ENCODE measurements at regions of chr12 and their contacts with region 1.

Region 1: GRCh38 chr12:442235-442884 is 17.4 kb upstream of the B4GALNT3 start:
- DNase-seq: peak; percentile 73
- H3K4me3 ChIP-seq: no peak overlapping the region
- H3K27ac ChIP-seq: no peak overlapping the region
- H3K4me1 ChIP-seq: no peaks in the 10 kb centered on the region
- H3K27me3 ChIP-seq: no peaks in the 10 kb centered on the region
- CTCF ChIP-seq: peak; percentile 78

Region 2: DNA sequence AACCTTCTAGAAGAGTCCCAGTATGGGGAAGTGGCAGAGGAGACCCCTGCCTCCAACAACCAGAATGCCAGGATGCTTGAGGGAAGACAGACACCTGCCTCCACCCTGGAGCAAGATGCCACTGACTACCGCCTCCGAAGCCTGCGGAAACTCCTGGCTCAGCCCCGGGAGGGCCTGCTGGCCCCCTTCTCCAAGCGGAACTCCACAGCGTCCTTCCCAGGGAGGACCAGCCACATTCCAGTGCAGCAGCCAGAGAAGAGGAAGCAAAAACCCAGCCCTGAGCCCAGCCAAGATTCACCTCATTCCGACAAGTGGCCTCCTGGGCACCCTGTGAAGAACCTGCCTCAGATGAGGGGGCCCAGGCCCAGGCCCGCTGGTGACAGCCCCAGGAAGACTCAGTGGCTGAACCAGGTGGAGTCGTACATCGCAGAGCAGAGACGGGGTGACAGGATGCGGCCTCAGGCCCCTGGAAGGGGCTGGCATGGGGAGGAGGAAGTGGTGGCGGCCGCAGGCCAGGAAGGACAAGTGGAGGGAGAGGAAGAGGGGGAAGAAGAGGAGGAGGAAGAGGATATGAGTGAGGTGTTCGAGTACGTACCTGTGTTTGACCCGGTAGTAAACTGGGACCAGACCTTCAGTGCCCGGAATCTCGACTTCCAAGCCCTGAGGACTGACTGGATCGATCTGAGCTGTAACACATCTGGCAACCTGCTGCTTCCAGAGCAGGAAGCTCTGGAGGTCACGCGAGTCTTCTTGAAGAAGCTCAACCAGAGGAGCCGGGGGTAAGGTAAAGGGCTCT is 111.0 kb after region 1 on chr12:
- intact Hi-C with region 1: loop called (anchors 5 kb)
- DNase-seq: no peak
- H3K4me3 ChIP-seq: no peak overlapping the region
- H3K27ac ChIP-seq: no peak overlapping the region
- H3K4me1 ChIP-seq: no peaks in the 10 kb centered on the region
- H3K27me3 ChIP-seq: no peaks in the 10 kb centered on the region
- CTCF ChIP-seq: no peak

Measured in colonic mucosa (tissue), 4 donors.